Right ventricle myocardium inferior (tissue), 1 donor: ENCODE measurements at regions of chr1 and their contacts with region 1.

Region 1: GRCh38 chr1:214029796-214030195 is 42.0 kb downstream of the PROX1 start:
- DNase-seq: no peak
- ATAC-seq: peak; percentile 79

Region 2: GRCh38 chr1:214014730-214015129 is 15.1 kb before region 1 on chr1:
- intact Hi-C with region 1: loop called (anchors 2 kb)
- DNase-seq: no peak
- ATAC-seq: peak; percentile 36

Region 3: GRCh38 chr1:214107322-214108096 is 77.7 kb after region 1 on chr1:
- intact Hi-C with region 1: loop called (anchors 2 kb)
- DNase-seq: peak; percentile 70
- ATAC-seq: peak; percentile 93